ENCODE measurements at regions of chr3 and their contacts with region 1.

Region 1: GRCh38 chr3:65785065-65785645 is 253.6 kb downstream of the MAGI1 start:
- DNase-seq: peak in 1 of 2 experiments; percentile 46
- H3K4me3 ChIP-seq: no peak overlapping the region
- H3K4me3 Mint-ChIP-seq: no peak overlapping the region
- H3K27ac Mint-ChIP-seq: no peak overlapping the region
- H3K4me1 ChIP-seq: no peaks in the 10 kb centered on the region; the same call in 1 of the 2 replicates
- H3K4me1 Mint-ChIP-seq: peaks cover 11% of the 10 kb centered on the region
- H3K27me3 ChIP-seq: no peaks in the 10 kb centered on the region
- H3K27me3 Mint-ChIP-seq: no peaks in the 10 kb centered on the region
- CTCF ChIP-seq: peak; percentile 51 to 69

Region 2: GRCh38 chr3:65914740-65915367 is 129.7 kb after region 1 on chr3:
- CTCF ChIA-PET with region 1: no interaction called
- POLR2A ChIA-PET with region 1: no interaction called
- intact Hi-C with region 1: loop called (anchors 1 kb)
- DNase-seq: no peak
- H3K4me3 ChIP-seq: no peak overlapping the region
- H3K4me3 Mint-ChIP-seq: no peak overlapping the region
- H3K27ac Mint-ChIP-seq: no peak overlapping the region
- H3K4me1 ChIP-seq: no peaks in the 10 kb centered on the region; the same call in 1 of the 2 replicates
- H3K4me1 Mint-ChIP-seq: peaks cover 8% of the 10 kb centered on the region
- H3K27me3 ChIP-seq: no peaks in the 10 kb centered on the region
- H3K27me3 Mint-ChIP-seq: no peaks in the 10 kb centered on the region
- CTCF ChIP-seq: peak in 1 of 2 experiments; percentile 5

Region 3: GRCh38 chr3:66047311-66048050 is 262.3 kb after region 1 on chr3:
- CTCF ChIA-PET with region 1: no interaction called
- POLR2A ChIA-PET with region 1: interaction called, 17 read pairs
- intact Hi-C with region 1: no loop called
- DNase-seq: no peak
- H3K4me3 ChIP-seq: no peak overlapping the region
- H3K4me3 Mint-ChIP-seq: no peak overlapping the region
- H3K27ac Mint-ChIP-seq: no peak overlapping the region
- H3K4me1 ChIP-seq: peaks cover 11% of the 10 kb centered on the region
- H3K4me1 Mint-ChIP-seq: peaks cover 6% of the 10 kb centered on the region
- H3K27me3 ChIP-seq: no peaks in the 10 kb centered on the region
- H3K27me3 Mint-ChIP-seq: no peaks in the 10 kb centered on the region
- CTCF ChIP-seq: peak in 1 of 2 experiments; percentile 14

Region 4: DNA sequence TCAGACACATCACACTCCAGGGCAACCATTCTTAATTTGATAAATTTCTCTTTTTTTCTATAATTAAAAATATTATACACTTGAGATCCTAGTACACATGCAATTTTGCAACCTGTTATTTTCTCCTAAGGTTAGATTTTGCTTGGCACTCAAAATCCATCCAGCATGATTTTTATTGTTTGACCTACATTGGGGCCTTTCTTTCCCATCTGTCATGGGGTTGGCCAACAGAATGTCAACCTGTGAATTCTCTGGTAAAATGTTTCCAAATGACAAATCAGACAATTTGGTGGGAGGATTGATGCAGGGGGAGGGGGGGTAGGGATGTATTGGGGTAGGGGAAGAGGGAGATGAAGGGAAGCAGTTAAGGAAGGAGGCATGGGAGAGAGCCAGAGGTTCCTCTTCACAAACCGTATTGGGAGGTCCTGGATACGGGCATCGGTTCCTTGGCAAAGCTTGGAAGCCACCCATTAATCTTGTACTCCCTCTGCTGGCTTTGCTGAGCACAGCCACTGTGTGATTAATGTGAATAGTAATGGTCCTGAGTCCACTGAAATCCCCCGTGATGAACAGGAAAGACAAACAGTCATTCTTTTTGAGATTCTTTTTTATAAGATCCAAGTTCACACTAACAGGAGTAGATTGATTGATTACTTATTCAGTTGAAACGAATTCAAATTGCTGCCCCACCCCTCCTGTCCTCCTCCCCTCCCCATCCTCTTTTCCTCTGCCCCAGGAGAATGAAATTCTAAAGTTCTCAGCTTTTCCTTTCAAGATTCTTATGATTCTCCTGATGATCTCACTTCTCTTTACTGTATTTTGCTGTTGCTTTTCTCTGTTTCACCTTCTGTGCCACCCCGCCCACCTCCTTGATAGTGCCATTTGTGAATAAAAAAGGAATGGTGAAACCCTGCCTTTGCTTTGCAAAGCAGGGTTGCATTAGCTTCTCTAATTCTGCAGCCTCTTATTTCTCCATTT is 353.5 kb after region 1 on chr3:
- CTCF ChIA-PET with region 1: interaction called, 3 read pairs
- POLR2A ChIA-PET with region 1: no interaction called
- intact Hi-C with region 1: loop called (anchors 1 kb)
- DNase-seq: peak; percentile 55 to 69
- H3K4me3 ChIP-seq: no peak overlapping the region
- H3K4me3 Mint-ChIP-seq: no peak overlapping the region
- H3K27ac Mint-ChIP-seq: no peak overlapping the region
- H3K4me1 ChIP-seq: peaks cover 9% of the 10 kb centered on the region
- H3K4me1 Mint-ChIP-seq: peaks cover 15% of the 10 kb centered on the region
- H3K27me3 ChIP-seq: no peaks in the 10 kb centered on the region
- H3K27me3 Mint-ChIP-seq: no peaks in the 10 kb centered on the region
- CTCF ChIP-seq: peak; percentile 56 to 70

Region 5: DNA sequence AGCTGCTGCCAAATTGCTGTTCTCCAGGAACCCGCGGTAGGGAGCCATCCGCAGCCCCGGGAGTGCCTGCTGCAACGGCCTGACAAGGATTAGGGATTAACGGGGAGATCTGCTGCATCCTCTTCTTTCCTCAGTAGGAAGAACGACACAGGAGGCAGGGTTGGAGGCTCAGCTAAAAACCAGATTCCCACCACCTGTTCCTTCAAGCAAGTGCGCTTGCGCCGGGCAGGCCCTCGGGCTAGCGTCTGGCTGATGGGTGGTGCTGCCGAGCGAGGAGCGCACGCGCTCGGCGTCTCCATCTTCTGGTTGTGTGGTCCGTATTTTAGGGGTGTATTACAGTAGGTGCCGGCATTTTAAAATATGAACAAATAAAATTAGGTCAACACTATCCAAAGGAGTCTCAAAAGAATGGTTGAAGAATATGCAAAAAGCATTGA is 410.2 kb after region 1 on chr3:
- CTCF ChIA-PET with region 1: no interaction called
- POLR2A ChIA-PET with region 1: no interaction called
- intact Hi-C with region 1: loop called (anchors 10 kb)
- DNase-seq: peak; percentile 58 to 62
- H3K4me3 ChIP-seq: peak overlapping the region; percentile 9
- H3K4me3 Mint-ChIP-seq: peak overlapping the region; percentile 45
- H3K27ac Mint-ChIP-seq: no peak overlapping the region
- H3K4me1 ChIP-seq: no peaks in the 10 kb centered on the region
- H3K4me1 Mint-ChIP-seq: no peaks in the 10 kb centered on the region
- H3K27me3 ChIP-seq: no peaks in the 10 kb centered on the region
- H3K27me3 Mint-ChIP-seq: no peaks in the 10 kb centered on the region
- CTCF ChIP-seq: no peak